Posterior cingulate gyrus (tissue), 11 donors: ENCODE measurements at regions of chrX and their contacts with region 1.

Region 1: GRCh38 chrX:19814778-19815177 is 72.6 kb downstream of the SH3KBP1 start:
- DNase-seq: no peak

Region 2: GRCh38 chrX:19585332-19586082 is 229.3 kb before region 1 on chrX:
- intact Hi-C with region 1: no loop called
- DNase-seq: peak in 2 of 10 donors; percentile 29 to 73

Region 3: GRCh38 chrX:19698125-19698524 is 116.7 kb before region 1 on chrX:
- intact Hi-C with region 1: no loop called
- DNase-seq: no peak

Region 4: GRCh38 chrX:19765628-19766027 is 49.1 kb before region 1 on chrX:
- intact Hi-C with region 1: loop called (anchors 5 kb)
- DNase-seq: no peak